ENCODE measurements at regions of chr12 and their contacts with region 1.

Region 1: DNA sequence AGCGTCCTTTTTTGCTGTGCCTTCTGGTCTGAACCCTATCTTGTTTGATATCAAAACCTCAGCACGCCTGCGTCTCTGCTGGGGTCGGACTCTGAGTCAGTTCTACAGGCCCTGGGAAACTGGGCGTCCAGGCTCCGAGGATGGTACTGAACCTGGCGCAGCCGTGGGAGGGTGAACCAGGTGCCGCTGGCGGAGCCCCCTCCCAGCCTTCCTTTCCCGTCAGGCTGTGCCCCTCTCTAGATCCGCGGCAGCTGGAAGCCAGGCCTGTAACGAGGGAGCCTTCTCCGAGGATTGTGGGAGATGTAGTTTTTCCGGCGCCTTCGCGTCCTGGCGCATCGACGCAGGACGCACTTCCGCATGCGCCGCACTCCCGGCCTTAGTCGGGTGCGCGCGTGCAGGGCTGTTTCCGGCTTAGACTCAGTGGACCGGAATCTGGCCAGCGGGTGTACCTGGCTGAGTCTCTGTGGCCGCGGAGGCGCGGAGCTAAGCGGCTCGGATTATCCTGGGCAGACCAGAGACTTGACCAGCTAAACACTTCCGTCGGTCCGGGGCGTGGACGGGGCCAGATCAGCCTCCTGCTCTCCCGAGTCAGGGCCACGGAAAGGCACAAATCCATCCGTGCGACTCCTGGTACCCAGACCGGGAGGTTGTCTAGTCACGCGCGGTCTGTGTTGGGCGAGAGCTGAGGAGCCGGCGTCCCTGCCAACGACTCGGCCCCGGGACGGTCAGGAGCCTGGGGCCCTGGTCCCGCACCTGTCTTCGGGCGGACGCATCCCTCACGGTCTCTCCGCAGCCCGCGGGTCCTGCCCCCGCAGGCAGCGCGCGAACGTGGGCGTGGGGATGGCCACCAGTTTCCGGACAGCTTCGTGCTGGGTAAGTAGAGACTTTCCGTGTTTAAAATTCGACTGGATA is at the start of gene ZNF26:
- DNase-seq: peak; percentile 96
- H3K4me3 Mint-ChIP-seq: peak within 1 kb of the TSS; percentile 86
- H3K27ac Mint-ChIP-seq: peak within 1 kb of the TSS; percentile 95
- H3K4me1 Mint-ChIP-seq: peaks cover 21% of the 10 kb centered on the region
- H3K27me3 Mint-ChIP-seq: no peaks in the 10 kb centered on the region
- total RNA-seq, gene ZNF26: 18.3 and 20.1 TPM in 2 replicates

Region 2: GRCh38 chr12:132887513-132888351 is 98.5 kb before region 1 on chr12 and contains the start of gene CHFR:
- intact Hi-C with region 1: loop called (anchors 1 kb)
- DNase-seq: peak; percentile 98
- H3K4me3 Mint-ChIP-seq: peak within 1 kb of the TSS; percentile 98
- H3K27ac Mint-ChIP-seq: peak within 1 kb of the TSS; percentile 99
- H3K4me1 Mint-ChIP-seq: peaks cover 13% of the 10 kb centered on the region
- H3K27me3 Mint-ChIP-seq: no peaks in the 10 kb centered on the region
- total RNA-seq, gene CHFR: 52.9 and 60.7 TPM in 2 replicates

Region 3: GRCh38 chr12:132956011-132956788 is 30.1 kb before region 1 on chr12 and contains the start of gene ZNF605:
- intact Hi-C with region 1: loop called (anchors 1 kb)
- DNase-seq: peak; percentile 96
- H3K4me3 Mint-ChIP-seq: peak within 1 kb of the TSS; percentile 98
- H3K27ac Mint-ChIP-seq: peak within 1 kb of the TSS; percentile 95
- H3K4me1 Mint-ChIP-seq: peaks cover 19% of the 10 kb centered on the region
- H3K27me3 Mint-ChIP-seq: no peaks in the 10 kb centered on the region
- total RNA-seq, gene ZNF605: 6.6 and 7.6 TPM in 2 replicates

Region 4: GRCh38 chr12:133130038-133130807 is 144.0 kb after region 1 on chr12 and contains the starts of genes ZNF10 and ZNF891:
- intact Hi-C with region 1: loop called (anchors 1 kb)
- DNase-seq: peak; percentile 99
- H3K4me3 Mint-ChIP-seq: peak within 1 kb of the TSS; percentile 98
- H3K27ac Mint-ChIP-seq: peak within 1 kb of the TSS; percentile 99
- H3K4me1 Mint-ChIP-seq: peaks cover 11% of the 10 kb centered on the region
- H3K27me3 Mint-ChIP-seq: no peaks in the 10 kb centered on the region
- total RNA-seq, gene ZNF10: 3.3 and 4.2 TPM in 2 replicates
- total RNA-seq, gene ZNF891: 2.2 and 2.4 TPM in 2 replicates

Region 5: GRCh38 chr12:133181238-133181959 is 195.1 kb after region 1 on chr12 and contains the start of gene ZNF268:
- intact Hi-C with region 1: loop called (anchors 1 kb)
- DNase-seq: peak; percentile 98
- H3K4me3 Mint-ChIP-seq: peak within 1 kb of the TSS; percentile 92
- H3K27ac Mint-ChIP-seq: peak within 1 kb of the TSS; percentile 93
- H3K4me1 Mint-ChIP-seq: peaks cover 6% of the 10 kb centered on the region
- H3K27me3 Mint-ChIP-seq: no peaks in the 10 kb centered on the region
- total RNA-seq, gene ZNF268: 17.2 and 19.4 TPM in 2 replicates

Region 6: GRCh38 chr12:133204264-133204603 is 218.0 kb after region 1 on chr12:
- intact Hi-C with region 1: no loop called
- DNase-seq: no peak
- H3K4me3 Mint-ChIP-seq: no peak overlapping the region
- H3K27ac Mint-ChIP-seq: no peak overlapping the region
- H3K4me1 Mint-ChIP-seq: no peaks in the 10 kb centered on the region
- H3K27me3 Mint-ChIP-seq: no peaks in the 10 kb centered on the region